ENCODE measurements at regions of chr9 and their contacts with region 1.

Region 1: DNA sequence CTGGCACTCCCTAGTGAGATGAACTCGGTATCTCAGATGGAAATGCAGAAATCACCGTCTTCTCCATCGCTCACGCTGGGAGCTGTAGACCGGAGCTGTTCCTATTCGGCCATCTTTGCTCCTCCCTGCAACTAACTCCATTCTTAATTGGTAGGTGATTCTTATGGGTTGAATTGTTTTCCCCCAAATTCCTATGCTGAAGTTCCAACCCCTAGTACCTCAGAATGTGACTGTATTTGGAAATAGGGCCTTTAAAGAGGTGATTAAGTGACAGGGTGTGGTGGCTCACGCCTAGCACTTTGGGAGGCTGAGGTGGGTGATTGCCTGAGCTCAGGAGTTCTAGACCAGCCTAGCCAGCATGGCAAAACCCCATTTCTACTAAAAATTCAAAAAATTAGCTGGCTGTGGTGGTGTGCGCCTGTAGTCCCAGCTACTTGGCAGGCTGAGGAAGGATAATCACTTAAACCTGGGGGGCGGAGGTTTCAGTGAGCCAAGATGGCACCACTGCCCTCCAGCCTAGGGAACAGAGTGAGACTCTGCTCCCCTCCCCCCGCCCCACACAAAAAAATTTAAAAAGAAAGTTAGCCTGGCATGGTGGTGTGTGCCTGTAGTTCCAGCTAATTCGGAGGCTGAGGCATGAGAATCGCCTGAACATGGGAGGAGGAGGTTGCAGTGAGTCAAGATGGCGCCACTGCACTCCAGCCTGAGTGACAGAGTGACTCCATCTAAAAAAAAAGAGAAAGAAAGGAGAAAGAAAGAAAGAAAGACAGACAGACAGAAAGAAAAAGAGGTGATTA is 25.2 kb upstream of the FOCAD start:
- DNase-seq: no peak
- ATAC-seq: peak; percentile 59
- H3K4me3 Mint-ChIP-seq: no peak overlapping the region
- H3K27ac Mint-ChIP-seq: peak overlapping the region; percentile 93
- H3K4me1 Mint-ChIP-seq: peaks cover 6% of the 10 kb centered on the region
- H3K27me3 Mint-ChIP-seq: peaks cover 6% of the 10 kb centered on the region; the same call in 1 of the 2 replicates
- CTCF ChIP-seq: no peak

Region 2: GRCh38 chr9:20640331-20641187 is 18.3 kb before region 1 on chr9:
- CTCF ChIA-PET with region 1: no interaction called
- POLR2A ChIA-PET with region 1: no interaction called
- DNase-seq: no peak
- ATAC-seq: no peak
- H3K4me3 Mint-ChIP-seq: no peak overlapping the region
- H3K27ac Mint-ChIP-seq: no peak overlapping the region
- H3K4me1 Mint-ChIP-seq: peaks cover 18% of the 10 kb centered on the region
- H3K27me3 Mint-ChIP-seq: no peaks in the 10 kb centered on the region
- CTCF ChIP-seq: no peak

Region 3: DNA sequence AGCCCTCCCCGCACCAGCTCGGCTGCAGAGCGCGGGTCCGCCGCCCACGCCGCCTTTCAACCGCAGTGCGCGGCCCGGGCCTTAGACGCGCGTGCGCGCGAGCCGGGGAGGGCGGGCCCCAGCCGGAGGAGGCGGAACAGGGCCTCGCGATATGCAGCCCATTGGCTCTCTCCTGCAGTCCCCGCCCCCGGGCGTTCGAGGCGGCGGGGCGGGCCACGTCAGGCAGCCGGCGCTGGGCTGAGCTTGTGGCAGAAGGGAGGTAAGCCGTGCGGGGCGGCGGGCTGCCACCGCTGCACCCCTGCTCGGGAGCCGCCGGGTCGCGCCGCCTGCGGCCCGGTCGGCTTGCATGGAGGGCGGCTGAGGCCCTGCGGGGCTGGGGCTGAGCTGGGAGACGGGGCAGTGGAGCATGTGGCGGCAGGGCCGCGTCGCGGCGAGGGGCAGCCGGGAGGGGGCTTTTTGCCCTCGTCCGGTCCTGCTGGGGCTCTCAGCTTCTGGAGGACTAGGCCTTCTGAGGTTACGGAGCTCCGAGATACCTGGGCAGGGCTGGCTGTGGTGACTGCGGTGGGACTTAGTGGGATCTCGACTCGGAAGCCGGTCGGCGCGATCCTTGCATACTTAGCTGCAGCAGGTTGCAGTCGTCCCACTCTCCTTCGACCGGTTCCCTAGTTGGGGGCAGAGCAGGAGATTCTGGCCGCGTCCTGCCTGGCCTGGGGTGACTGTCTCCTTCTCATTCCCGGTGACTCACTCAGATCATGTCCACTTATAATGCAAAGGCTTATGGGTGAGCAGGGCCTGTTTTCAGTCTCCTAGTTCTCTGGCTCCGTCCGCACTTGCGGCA is 25.4 kb after region 1 on chr9 and contains the start of gene FOCAD:
- CTCF ChIA-PET with region 1: interaction called, 4 read pairs
- POLR2A ChIA-PET with region 1: interaction called, 14 read pairs
- DNase-seq: peak; percentile 98
- ATAC-seq: peak; percentile 98
- H3K4me3 Mint-ChIP-seq: peak within 1 kb of the TSS; percentile 76
- H3K27ac Mint-ChIP-seq: peak within 1 kb of the TSS; percentile 92
- H3K4me1 Mint-ChIP-seq: peaks cover 17% of the 10 kb centered on the region
- H3K27me3 Mint-ChIP-seq: no peaks in the 10 kb centered on the region
- CTCF ChIP-seq: no peak
- total RNA-seq, gene FOCAD: 34.3 to 37.1 TPM (median 36.3 TPM) in 3 replicates

Region 4: GRCh38 chr9:20722221-20722620 is 63.3 kb after region 1 on chr9:
- CTCF ChIA-PET with region 1: no interaction called
- POLR2A ChIA-PET with region 1: interaction called, 11 read pairs
- DNase-seq: no peak
- ATAC-seq: no peak
- H3K4me3 Mint-ChIP-seq: no peak overlapping the region
- H3K27ac Mint-ChIP-seq: peak overlapping the region; percentile 60
- H3K4me1 Mint-ChIP-seq: 0 out of 2 replicates have a peak, but pooled peaks cover 2% of the 10 kb centered on the region
- H3K27me3 Mint-ChIP-seq: no peaks in the 10 kb centered on the region
- CTCF ChIP-seq: no peak